ENCODE measurements at regions of chr22 and their contacts with region 1.

Region 1: GRCh38 chr22:49305214-49305909 is 522.3 kb downstream of the BRD1 start:
- DNase-seq: peak; percentile 18
- ATAC-seq: peak; percentile 97
- H3K4me3 ChIP-seq: peak overlapping the region; percentile 19 to 44
- H3K27ac ChIP-seq: no peak overlapping the region
- H3K4me1 ChIP-seq: peaks cover 0 to 7% of the 10 kb centered on the region in 2 experiments; a peak in 1 of 4 replicates
- H3K27me3 ChIP-seq: peaks cover 16% of the 10 kb centered on the region
- CTCF ChIP-seq: peak; percentile 79 to 96 (median 91)
- POLR2A ChIP-seq: no peak
- RAD21 ChIP-seq: peak; percentile 93

Region 2: GRCh38 chr22:48760481-48761390 is 544.6 kb before region 1 on chr22:
- CTCF ChIA-PET with region 1: no interaction called
- POLR2A ChIA-PET with region 1: no interaction called
- RAD21 ChIA-PET with region 1: no interaction called
- intact Hi-C with region 1: loop called (anchors 10 kb)
- DNase-seq: no peak
- ATAC-seq: no peak
- H3K4me3 ChIP-seq: no peak overlapping the region
- H3K27ac ChIP-seq: no peak overlapping the region
- H3K4me1 ChIP-seq: no peaks in the 10 kb centered on the region
- H3K27me3 ChIP-seq: 0 out of 2 replicates have a peak, but pooled peaks cover 7% of the 10 kb centered on the region
- CTCF ChIP-seq: no peak
- POLR2A ChIP-seq: no peak
- RAD21 ChIP-seq: no peak

Region 3: GRCh38 chr22:48782811-48783511 is 522.4 kb before region 1 on chr22:
- CTCF ChIA-PET with region 1: interaction called, 10 read pairs
- POLR2A ChIA-PET with region 1: no interaction called
- RAD21 ChIA-PET with region 1: no interaction called
- intact Hi-C with region 1: no loop called
- DNase-seq: peak; percentile 7
- ATAC-seq: peak; percentile 75
- H3K4me3 ChIP-seq: no peak overlapping the region
- H3K27ac ChIP-seq: no peak overlapping the region
- H3K4me1 ChIP-seq: no peaks in the 10 kb centered on the region
- H3K27me3 ChIP-seq: no peaks in the 10 kb centered on the region
- CTCF ChIP-seq: peak; percentile 18 to 61 (median 57); a peak in 4 of 6 replicates
- POLR2A ChIP-seq: no peak
- RAD21 ChIP-seq: peak; percentile 29; the same call in 1 of the 2 replicates

Region 4: GRCh38 chr22:48943567-48944432 is 361.6 kb before region 1 on chr22:
- CTCF ChIA-PET with region 1: interaction called, 14 read pairs
- POLR2A ChIA-PET with region 1: no interaction called
- RAD21 ChIA-PET with region 1: no interaction called
- intact Hi-C with region 1: no loop called
- DNase-seq: no peak
- ATAC-seq: peak; percentile 98
- H3K4me3 ChIP-seq: no peak overlapping the region
- H3K27ac ChIP-seq: no peak overlapping the region
- H3K4me1 ChIP-seq: no peaks in the 10 kb centered on the region
- H3K27me3 ChIP-seq: no peaks in the 10 kb centered on the region
- CTCF ChIP-seq: peak; percentile 34 to 86 (median 67); a peak in 5 of 6 replicates
- POLR2A ChIP-seq: no peak
- RAD21 ChIP-seq: peak; percentile 47

Region 5: GRCh38 chr22:48979482-48979881 is 325.9 kb before region 1 on chr22:
- CTCF ChIA-PET with region 1: interaction called, 29 read pairs
- POLR2A ChIA-PET with region 1: no interaction called
- RAD21 ChIA-PET with region 1: no interaction called
- intact Hi-C with region 1: loop called (anchors 1 kb)
- DNase-seq: peak; percentile 26
- ATAC-seq: peak; percentile 80
- H3K4me3 ChIP-seq: no peak overlapping the region
- H3K27ac ChIP-seq: no peak overlapping the region
- H3K4me1 ChIP-seq: no peaks in the 10 kb centered on the region
- H3K27me3 ChIP-seq: peaks cover 41% of the 10 kb centered on the region
- CTCF ChIP-seq: peak; percentile 25 to 58 (median 41); a peak in 5 of 6 replicates
- POLR2A ChIP-seq: no peak
- RAD21 ChIP-seq: peak; percentile 39; the same call in 1 of the 2 replicates

Region 6: GRCh38 chr22:49046546-49047361 is 258.6 kb before region 1 on chr22:
- CTCF ChIA-PET with region 1: interaction called, 207 read pairs
- POLR2A ChIA-PET with region 1: interaction called, 3 read pairs
- RAD21 ChIA-PET with region 1: interaction called, 40 to 45 read pairs
- intact Hi-C with region 1: loop called (anchors 1 kb)
- DNase-seq: peak; percentile 46
- ATAC-seq: peak; percentile 99
- H3K4me3 ChIP-seq: no peak overlapping the region
- H3K27ac ChIP-seq: no peak overlapping the region
- H3K4me1 ChIP-seq: no peaks in the 10 kb centered on the region
- H3K27me3 ChIP-seq: peaks cover 39% of the 10 kb centered on the region
- CTCF ChIP-seq: peak; percentile 51 to 86 (median 72); a peak in 5 of 6 replicates
- POLR2A ChIP-seq: no peak
- RAD21 ChIP-seq: peak; percentile 80

Region 7: DNA sequence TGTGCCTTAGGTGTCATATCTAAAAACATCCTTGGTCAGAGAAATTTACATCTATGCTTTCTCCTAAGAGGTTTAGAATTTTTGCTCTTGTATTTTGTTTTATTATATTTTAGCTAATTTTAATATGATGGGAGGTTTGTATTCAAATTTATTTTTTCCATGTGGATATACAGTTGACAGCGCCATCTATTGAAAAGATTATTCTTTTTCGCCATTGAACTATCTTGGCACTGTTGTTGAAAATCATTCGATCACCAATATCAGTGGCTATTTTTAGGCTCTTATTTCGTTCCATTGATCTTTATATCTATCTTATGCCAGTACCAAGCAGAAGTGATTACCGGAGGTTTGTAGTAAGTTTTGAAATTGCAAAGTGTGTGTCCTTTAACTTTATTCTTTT is 12.0 kb after region 1 on chr22:
- CTCF ChIA-PET with region 1: interaction called, 18 read pairs
- POLR2A ChIA-PET with region 1: no interaction called
- RAD21 ChIA-PET with region 1: no interaction called
- intact Hi-C with region 1: no loop called
- DNase-seq: no peak
- ATAC-seq: no peak
- H3K4me3 ChIP-seq: no peak overlapping the region
- H3K27ac ChIP-seq: no peak overlapping the region
- H3K4me1 ChIP-seq: no peaks in the 10 kb centered on the region
- H3K27me3 ChIP-seq: peaks cover 71% of the 10 kb centered on the region
- CTCF ChIP-seq: peak; percentile 16 to 53 (median 37); a peak in 5 of 6 replicates
- POLR2A ChIP-seq: no peak
- RAD21 ChIP-seq: peak; percentile 37

Region 8: DNA sequence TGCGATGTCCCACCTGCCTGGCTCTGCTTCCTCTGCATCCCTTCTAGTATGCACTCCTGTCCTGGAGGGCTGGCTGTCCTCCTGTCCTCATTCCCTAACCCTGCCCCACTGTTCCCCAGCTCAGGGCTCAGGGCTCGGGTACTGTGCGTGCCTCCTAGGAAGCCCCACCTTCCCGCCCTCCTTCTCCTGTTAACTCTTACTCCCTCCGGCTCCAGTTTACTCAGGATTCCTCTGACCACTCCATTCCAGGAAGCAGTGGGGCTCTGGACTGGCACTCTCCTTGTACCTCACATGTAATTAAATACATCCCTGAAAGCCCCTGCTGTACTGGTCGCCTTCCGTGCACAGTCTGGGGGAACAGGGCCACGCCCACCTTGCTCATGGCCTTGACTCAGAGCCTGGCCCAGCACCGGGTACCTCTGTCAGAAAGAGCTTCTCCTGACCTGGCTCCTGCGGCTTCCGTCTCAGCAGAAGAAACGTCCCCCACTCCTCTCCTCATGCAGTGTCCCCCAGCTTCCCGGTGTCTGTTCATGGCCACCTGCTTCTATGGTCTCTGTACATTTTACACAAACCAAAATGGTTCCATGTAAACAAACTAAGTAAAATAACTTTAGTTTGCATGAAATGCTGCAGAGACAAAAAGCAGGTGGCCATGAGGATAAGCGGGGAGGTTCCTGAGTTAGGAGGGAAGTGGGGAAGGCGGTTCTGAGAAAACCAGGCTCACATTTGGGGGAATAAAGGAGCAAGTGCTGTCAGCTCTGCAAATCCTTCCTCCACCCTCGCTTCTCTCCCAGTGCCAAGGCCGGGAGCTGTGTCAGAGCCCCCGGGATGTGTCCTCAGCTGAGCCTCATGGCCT is 76.5 kb after region 1 on chr22:
- CTCF ChIA-PET with region 1: no interaction called
- POLR2A ChIA-PET with region 1: no interaction called
- RAD21 ChIA-PET with region 1: no interaction called
- intact Hi-C with region 1: no loop called
- DNase-seq: no peak
- ATAC-seq: no peak
- H3K4me3 ChIP-seq: no peak overlapping the region
- H3K27ac ChIP-seq: no peak overlapping the region
- H3K4me1 ChIP-seq: peaks cover 0 to 6% of the 10 kb centered on the region in 2 experiments; a peak in 2 of 4 replicates
- H3K27me3 ChIP-seq: no peaks in the 10 kb centered on the region
- CTCF ChIP-seq: no peak
- POLR2A ChIP-seq: no peak
- RAD21 ChIP-seq: no peak

Measured in HCT116 (cell line).